IMR-90 (cell line): ENCODE measurements at regions of chr12 and their contacts with region 1.

Region 1: DNA sequence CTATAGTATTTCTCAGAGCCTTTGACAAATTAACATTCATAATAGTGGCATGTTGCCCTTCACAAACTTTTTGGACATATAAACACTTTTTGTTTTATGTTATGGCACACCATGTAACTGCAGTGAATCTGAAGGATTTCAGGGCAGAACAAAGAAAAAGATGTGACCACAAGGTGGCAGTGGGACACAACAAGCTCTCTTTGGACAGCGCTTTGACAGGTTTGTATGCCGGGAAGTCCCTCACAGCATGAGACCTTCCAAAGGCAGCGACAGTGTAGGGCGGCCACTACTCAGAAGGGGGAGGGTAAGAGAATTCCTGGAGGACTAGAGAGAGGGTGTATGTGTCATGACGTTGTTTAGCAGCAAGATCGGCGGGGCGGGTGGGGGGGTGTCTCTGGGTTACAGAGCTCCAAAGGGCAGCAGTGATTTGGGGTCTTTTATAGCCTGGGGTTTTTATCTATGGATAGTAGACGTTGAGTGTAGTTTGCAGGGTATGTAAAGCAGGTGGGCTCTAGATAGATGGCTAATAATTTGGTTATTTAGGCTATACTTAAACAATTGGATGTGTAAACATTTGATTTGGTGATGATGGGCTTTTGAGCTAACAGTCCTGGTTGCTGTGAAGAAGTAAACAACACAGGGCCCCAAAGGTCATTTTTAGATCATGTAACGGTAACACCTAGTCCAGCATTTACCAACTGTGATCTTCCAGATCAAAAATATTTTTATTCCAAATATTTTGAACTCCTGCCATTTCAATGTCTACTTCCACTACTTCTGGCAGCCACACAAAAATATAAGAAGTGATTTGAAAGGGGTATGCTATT is 22.9 kb downstream of the ETFBKMT start:
- DNase-seq: peak; percentile 82
- ATAC-seq: peak; percentile 81
- H3K4me3 ChIP-seq: no peak overlapping the region
- H3K27ac ChIP-seq: no peak overlapping the region
- H3K4me1 ChIP-seq: no peaks in the 10 kb centered on the region
- H3K27me3 ChIP-seq: no peaks in the 10 kb centered on the region
- CTCF ChIP-seq: peak; percentile 84
- POLR2A ChIP-seq: no peak
- RAD21 ChIP-seq: peak; percentile 96

Region 2: GRCh38 chr12:31618228-31619025 is 63.9 kb before region 1 on chr12:
- CTCF ChIA-PET with region 1: no interaction called
- POLR2A ChIA-PET with region 1: no interaction called
- dilution Hi-C with region 1: no loop called
- in situ Hi-C with region 1: no loop called
- intact Hi-C with region 1: no loop called
- DNase-seq: peak; percentile 26
- ATAC-seq: no peak
- H3K4me3 ChIP-seq: no peak overlapping the region
- H3K27ac ChIP-seq: no peak overlapping the region
- H3K4me1 ChIP-seq: no peaks in the 10 kb centered on the region
- H3K27me3 ChIP-seq: no peaks in the 10 kb centered on the region
- CTCF ChIP-seq: no peak
- POLR2A ChIP-seq: no peak
- RAD21 ChIP-seq: no peak

Region 3: GRCh38 chr12:31728917-31729640 is 46.7 kb after region 1 on chr12 and contains the start of gene AMN1:
- CTCF ChIA-PET with region 1: no interaction called
- POLR2A ChIA-PET with region 1: no interaction called
- dilution Hi-C with region 1: no loop called
- in situ Hi-C with region 1: no loop called
- intact Hi-C with region 1: no loop called
- DNase-seq: peak; percentile 99
- ATAC-seq: peak; percentile 98
- H3K4me3 ChIP-seq: peak within 1 kb of the TSS; percentile 79
- H3K27ac ChIP-seq: peak within 1 kb of the TSS; percentile 83
- H3K4me1 ChIP-seq: peaks cover 4% of the 10 kb centered on the region; the same call in 1 of the 2 replicates
- H3K27me3 ChIP-seq: no peaks in the 10 kb centered on the region
- CTCF ChIP-seq: peak; percentile 15; the same call in 1 of the 2 replicates
- POLR2A ChIP-seq: peak; percentile 71
- RAD21 ChIP-seq: no peak
- total RNA-seq, gene AMN1: 3.4 and 6.1 TPM in 2 replicates

Region 4: GRCh38 chr12:31773867-31774266 is 91.5 kb after region 1 on chr12:
- CTCF ChIA-PET with region 1: no interaction called
- POLR2A ChIA-PET with region 1: no interaction called
- dilution Hi-C with region 1: no loop called
- in situ Hi-C with region 1: no loop called
- intact Hi-C with region 1: no loop called
- DNase-seq: no peak
- ATAC-seq: no peak
- H3K4me3 ChIP-seq: no peak overlapping the region
- H3K27ac ChIP-seq: no peak overlapping the region
- H3K4me1 ChIP-seq: peaks cover 2% of the 10 kb centered on the region; the same call in 1 of the 2 replicates
- H3K27me3 ChIP-seq: peaks cover 11% of the 10 kb centered on the region; the same call in 1 of the 2 replicates
- CTCF ChIP-seq: no peak
- POLR2A ChIP-seq: no peak
- RAD21 ChIP-seq: no peak

Region 5: GRCh38 chr12:31959161-31959700 is 276.9 kb after region 1 on chr12 and contains the start of gene RESF1:
- CTCF ChIA-PET with region 1: no interaction called
- POLR2A ChIA-PET with region 1: no interaction called
- dilution Hi-C with region 1: no loop called
- in situ Hi-C with region 1: loop called (anchors 25 kb)
- intact Hi-C with region 1: loop called (anchors 10 kb)
- DNase-seq: peak; percentile 76
- ATAC-seq: peak; percentile 98
- H3K4me3 ChIP-seq: peak within 1 kb of the TSS; percentile 61
- H3K27ac ChIP-seq: peak within 1 kb of the TSS; percentile 61
- H3K4me1 ChIP-seq: peaks cover 3% of the 10 kb centered on the region
- H3K27me3 ChIP-seq: no peaks in the 10 kb centered on the region
- CTCF ChIP-seq: 0 out of 2 replicates have a peak, but pooled peaks have one; percentile 4
- POLR2A ChIP-seq: 0 out of 2 replicates have a peak, but pooled peaks have one; percentile 48
- RAD21 ChIP-seq: peak; percentile 1; the same call in 1 of the 2 replicates
- total RNA-seq, gene RESF1: 7.3 and 10.3 TPM in 2 replicates

Region 6: DNA sequence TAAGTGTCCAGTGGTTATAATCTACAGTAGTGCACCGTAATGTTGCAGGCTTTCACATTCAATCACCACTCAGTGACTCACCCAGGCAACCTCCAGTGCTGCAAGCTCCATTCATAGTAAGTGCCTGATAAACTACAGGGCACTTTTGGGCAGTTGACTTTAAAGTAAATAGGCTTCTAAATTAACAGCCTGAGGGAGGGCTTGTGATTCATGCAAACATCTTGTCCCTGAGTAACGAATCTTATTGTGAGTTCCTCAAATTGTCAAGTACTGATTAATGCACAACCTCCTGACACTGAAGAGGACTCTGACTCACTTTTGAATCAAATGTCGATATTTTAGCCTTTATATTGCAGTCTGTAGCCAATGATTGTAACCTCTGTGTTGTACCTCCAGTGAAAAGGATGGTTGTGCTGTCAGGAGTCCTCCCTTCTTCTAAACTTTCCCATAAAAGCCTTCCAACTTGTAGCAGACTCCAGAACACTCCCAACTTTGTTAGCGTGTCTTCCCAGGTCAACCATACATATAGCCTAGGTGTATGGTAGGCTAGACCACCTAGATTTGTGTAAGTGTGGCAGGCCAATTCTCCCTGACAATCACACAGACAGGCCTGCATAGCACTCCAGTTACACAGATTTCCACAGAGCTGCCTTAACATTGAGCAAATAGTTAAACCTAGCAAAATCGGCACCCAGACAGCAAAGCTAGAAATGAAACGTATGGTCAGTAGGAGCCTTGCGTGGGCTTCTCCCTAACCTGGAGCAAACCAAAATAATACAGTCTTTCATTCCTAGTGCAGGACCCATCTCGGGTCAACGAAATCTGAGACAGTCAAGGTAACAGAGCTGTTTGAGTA is 369.4 kb after region 1 on chr12:
- CTCF ChIA-PET with region 1: no interaction called
- POLR2A ChIA-PET with region 1: no interaction called
- dilution Hi-C with region 1: no loop called
- in situ Hi-C with region 1: no loop called
- intact Hi-C with region 1: loop called (anchors 2 kb)
- DNase-seq: peak; percentile 96
- ATAC-seq: peak; percentile 95
- H3K4me3 ChIP-seq: no peak overlapping the region
- H3K27ac ChIP-seq: peak overlapping the region; percentile 4; the same call in 1 of the 2 replicates
- H3K4me1 ChIP-seq: peaks cover 7% of the 10 kb centered on the region
- H3K27me3 ChIP-seq: no peaks in the 10 kb centered on the region
- CTCF ChIP-seq: no peak
- POLR2A ChIP-seq: no peak
- RAD21 ChIP-seq: peak; percentile 12; the same call in 1 of the 2 replicates

Region 7: DNA sequence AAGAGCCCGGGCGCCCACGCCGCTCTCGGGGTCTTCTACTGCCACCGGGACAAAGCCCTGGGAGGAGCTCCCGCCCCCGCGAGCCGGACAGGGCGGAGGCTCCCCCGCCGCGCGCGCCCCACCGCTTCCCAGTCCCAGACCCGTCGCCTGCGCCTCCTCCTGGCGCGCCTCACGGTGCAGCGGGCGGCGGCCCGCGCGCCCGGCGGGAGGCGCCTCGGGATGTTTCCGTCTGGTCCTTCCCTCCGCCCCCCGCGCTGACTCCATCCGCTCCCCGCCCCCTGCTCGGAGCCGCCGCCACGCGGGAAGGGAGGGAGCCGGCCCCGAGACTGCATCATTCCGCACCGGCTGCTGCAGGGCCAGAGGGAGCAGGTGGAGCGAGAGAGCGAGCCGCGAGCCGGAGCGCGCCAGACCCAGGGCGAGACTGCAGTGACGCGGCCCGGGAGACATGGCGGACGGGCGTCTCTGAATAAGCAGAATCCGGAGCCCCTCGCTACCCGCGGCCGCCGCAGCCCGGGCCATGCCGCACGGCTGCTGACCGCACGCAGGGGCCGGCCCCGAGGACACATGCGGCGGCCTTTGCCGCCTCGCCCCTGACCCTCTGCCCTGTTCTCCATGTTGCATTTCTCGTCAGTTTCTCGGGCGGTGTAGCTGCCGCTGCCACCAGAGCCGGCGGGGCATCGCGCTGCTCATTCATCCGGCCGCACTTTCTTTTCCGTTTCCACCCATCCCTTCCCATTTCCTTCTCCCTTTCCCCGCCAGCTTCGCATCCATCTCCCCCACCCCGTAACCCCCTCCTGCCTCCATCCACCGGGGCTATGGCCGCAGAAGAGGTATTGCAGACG is 424.4 kb after region 1 on chr12 and contains the start of gene BICD1:
- CTCF ChIA-PET with region 1: no interaction called
- POLR2A ChIA-PET with region 1: no interaction called
- dilution Hi-C with region 1: no loop called
- in situ Hi-C with region 1: no loop called
- intact Hi-C with region 1: loop called (anchors 5 kb)
- DNase-seq: peak; percentile 87
- ATAC-seq: peak; percentile 91
- H3K4me3 ChIP-seq: peak within 1 kb of the TSS; percentile 85
- H3K27ac ChIP-seq: peak within 1 kb of the TSS; percentile 91
- H3K4me1 ChIP-seq: peaks cover 4% of the 10 kb centered on the region
- H3K27me3 ChIP-seq: no peaks in the 10 kb centered on the region
- CTCF ChIP-seq: peak; percentile 58
- POLR2A ChIP-seq: peak; percentile 95
- RAD21 ChIP-seq: peak; percentile 27
- total RNA-seq, gene BICD1: 17.2 and 25.0 TPM in 2 replicates

Region 8: GRCh38 chr12:32312049-32312670 is 629.8 kb after region 1 on chr12:
- CTCF ChIA-PET with region 1: no interaction called
- POLR2A ChIA-PET with region 1: no interaction called
- dilution Hi-C with region 1: no loop called
- in situ Hi-C with region 1: loop called (anchors 10 kb)
- intact Hi-C with region 1: loop called (anchors 1 kb)
- DNase-seq: peak; percentile 72
- ATAC-seq: peak; percentile 76
- H3K4me3 ChIP-seq: no peak overlapping the region
- H3K27ac ChIP-seq: no peak overlapping the region
- H3K4me1 ChIP-seq: peaks cover 2% of the 10 kb centered on the region; the same call in 1 of the 2 replicates
- H3K27me3 ChIP-seq: no peaks in the 10 kb centered on the region
- CTCF ChIP-seq: peak; percentile 69
- POLR2A ChIP-seq: no peak
- RAD21 ChIP-seq: peak; percentile 59